ENCODE measurements at regions of chr5 and their contacts with region 1.

Region 1: GRCh38 chr5:160439205-160439600 is 17.5 kb downstream of the PTTG1 start:
- DNase-seq: peak; percentile 70
- H3K4me3 ChIP-seq: peak overlapping the region; percentile 38 to 49 (median 42)
- H3K27ac ChIP-seq: peak overlapping the region; percentile 27
- H3K4me1 ChIP-seq: peaks cover 17% of the 10 kb centered on the region
- H3K27me3 ChIP-seq: no peaks in the 10 kb centered on the region
- CTCF ChIP-seq: peak; percentile 93 to 95

Region 2: GRCh38 chr5:160649304-160649703 is 210.1 kb after region 1 on chr5:
- CTCF ChIA-PET with region 1: interaction called, 3 read pairs
- dilution Hi-C with region 1: no loop called
- in situ Hi-C with region 1: no loop called
- intact Hi-C with region 1: loop called (anchors 5 kb)
- DNase-seq: peak; percentile 16
- H3K4me3 ChIP-seq: no peak overlapping the region
- H3K27ac ChIP-seq: no peak overlapping the region
- H3K4me1 ChIP-seq: no peaks in the 10 kb centered on the region
- H3K27me3 ChIP-seq: no peaks in the 10 kb centered on the region
- CTCF ChIP-seq: peak; percentile 44 to 58

Region 3: GRCh38 chr5:160787240-160787639 is 348.0 kb after region 1 on chr5:
- CTCF ChIA-PET with region 1: no interaction called
- dilution Hi-C with region 1: no loop called
- in situ Hi-C with region 1: loop called in 1 of 2 experiments (anchors 10 kb)
- intact Hi-C with region 1: loop called (anchors 1 kb)
- DNase-seq: peak; percentile 40
- H3K4me3 ChIP-seq: no peak overlapping the region
- H3K27ac ChIP-seq: no peak overlapping the region
- H3K4me1 ChIP-seq: no peaks in the 10 kb centered on the region
- H3K27me3 ChIP-seq: no peaks in the 10 kb centered on the region
- CTCF ChIP-seq: peak; percentile 61 to 77

Region 4: GRCh38 chr5:160846642-160847041 is 407.4 kb after region 1 on chr5:
- CTCF ChIA-PET with region 1: interaction called, 21 read pairs
- dilution Hi-C with region 1: no loop called
- in situ Hi-C with region 1: no loop called
- intact Hi-C with region 1: loop called (anchors 1 kb)
- DNase-seq: no peak
- H3K4me3 ChIP-seq: no peak overlapping the region
- H3K27ac ChIP-seq: no peak overlapping the region
- H3K4me1 ChIP-seq: no peaks in the 10 kb centered on the region
- H3K27me3 ChIP-seq: no peaks in the 10 kb centered on the region
- CTCF ChIP-seq: peak in 1 of 2 donors; percentile 30

Region 5: DNA sequence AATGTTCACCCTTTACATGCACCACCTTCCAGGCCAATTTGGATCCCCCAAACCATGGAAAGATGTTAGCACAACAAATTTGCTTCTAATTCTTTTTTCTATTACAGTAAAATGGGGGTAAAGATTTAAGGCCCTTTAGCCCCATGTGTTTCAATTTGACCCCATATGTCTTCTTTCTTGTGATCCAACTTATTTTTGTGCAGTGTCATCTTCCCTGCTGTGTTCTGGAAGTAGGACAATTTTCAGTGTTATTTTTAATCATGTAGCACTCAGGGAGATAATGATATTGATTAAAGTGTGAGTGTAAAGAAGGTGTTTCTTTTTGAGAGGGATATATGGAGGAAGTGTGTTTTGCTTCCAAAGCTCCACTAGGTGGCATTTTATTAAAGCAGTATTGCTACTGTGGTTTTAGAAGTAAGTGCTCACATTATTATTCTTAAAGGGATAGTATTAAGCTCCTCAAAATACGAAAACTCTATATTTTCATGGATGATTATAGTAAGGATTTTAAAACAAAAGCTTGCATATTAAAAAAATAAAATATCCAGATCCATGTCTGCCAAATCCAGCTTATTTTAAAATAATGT is 531.5 kb after region 1 on chr5:
- CTCF ChIA-PET with region 1: no interaction called
- dilution Hi-C with region 1: no loop called
- in situ Hi-C with region 1: no loop called
- intact Hi-C with region 1: loop called (anchors 5 kb)
- DNase-seq: peak; percentile 24
- H3K4me3 ChIP-seq: no peak overlapping the region
- H3K27ac ChIP-seq: no peak overlapping the region
- H3K4me1 ChIP-seq: peaks cover 7% of the 10 kb centered on the region
- H3K27me3 ChIP-seq: no peaks in the 10 kb centered on the region
- CTCF ChIP-seq: peak; percentile 51 to 60

Region 6: DNA sequence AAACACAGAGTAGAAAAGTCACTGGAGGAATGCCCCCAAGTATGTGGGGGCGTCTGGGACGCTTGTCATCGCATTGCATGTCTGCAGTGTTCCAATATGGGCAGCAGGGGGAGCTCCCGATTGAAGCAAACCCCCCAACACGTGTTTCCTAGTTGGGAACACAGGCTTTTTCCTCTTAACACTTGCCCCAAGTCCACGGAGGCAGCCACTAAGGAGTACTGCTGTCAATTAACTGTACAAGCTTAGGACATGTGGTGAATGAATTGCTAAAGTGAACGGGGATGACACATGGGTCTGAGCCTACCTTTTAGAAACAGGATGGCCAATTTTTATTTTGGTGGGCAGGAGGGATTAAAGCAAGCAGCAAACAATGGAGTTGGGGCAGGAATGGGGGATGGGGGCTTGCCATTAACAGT is 1105.2 kb after region 1 on chr5:
- CTCF ChIA-PET with region 1: no interaction called
- dilution Hi-C with region 1: no loop called
- in situ Hi-C with region 1: no loop called
- intact Hi-C with region 1: loop called (anchors 2 kb)
- DNase-seq: peak; percentile 5
- H3K4me3 ChIP-seq: no peak overlapping the region
- H3K27ac ChIP-seq: no peak overlapping the region
- H3K4me1 ChIP-seq: peaks cover 4% of the 10 kb centered on the region
- H3K27me3 ChIP-seq: peaks cover 26% of the 10 kb centered on the region
- CTCF ChIP-seq: peak; percentile 79 to 87